ENCODE measurements at regions of chr6 and their contacts with region 1.

Region 1: DNA sequence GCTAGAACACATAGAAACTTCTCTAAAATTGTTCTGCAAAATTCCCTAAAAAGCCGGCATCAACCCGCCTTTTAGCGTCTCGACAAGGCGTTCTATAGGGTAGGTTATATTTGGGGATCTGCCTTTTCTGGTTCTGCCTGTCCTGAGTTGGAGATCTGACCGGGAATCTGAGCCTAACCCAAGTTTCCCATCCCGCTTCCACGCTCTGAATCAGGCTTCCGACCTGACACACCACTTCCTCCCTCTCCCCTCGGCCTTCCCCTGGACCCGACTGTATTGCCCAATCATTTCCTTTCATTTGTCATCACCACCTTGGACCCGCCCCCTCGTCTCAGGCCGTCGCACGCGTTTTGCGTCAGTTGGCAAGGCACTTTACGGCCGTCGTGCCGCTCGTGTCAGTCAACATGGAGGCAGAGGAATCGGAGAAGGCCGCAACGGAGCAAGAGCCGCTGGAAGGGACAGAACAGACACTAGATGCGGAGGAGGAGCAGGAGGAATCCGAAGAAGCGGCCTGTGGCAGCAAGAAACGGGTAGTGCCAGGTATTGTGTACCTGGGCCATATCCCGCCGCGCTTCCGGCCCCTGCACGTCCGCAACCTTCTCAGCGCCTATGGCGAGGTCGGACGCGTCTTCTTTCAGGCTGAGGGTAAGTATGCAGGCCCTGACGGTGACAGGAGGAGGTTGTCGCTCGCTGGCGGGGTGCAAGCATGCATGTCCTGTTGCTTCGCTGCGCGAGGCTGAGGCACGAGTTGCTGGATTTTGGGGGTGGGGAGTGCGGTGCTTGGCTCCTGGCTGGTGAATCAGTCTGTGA is at the start of gene ABT1:
- DNase-seq: peak; percentile 98
- H3K4me3 ChIP-seq: peak within 1 kb of the TSS; percentile 88 to 94
- H3K27ac ChIP-seq: peak within 1 kb of the TSS; percentile 85 to 87
- H3K4me1 ChIP-seq: peaks cover 0 to 8% of the 10 kb centered on the region in 2 donors
- H3K27me3 ChIP-seq: peaks cover 0 to 24% of the 10 kb centered on the region in 2 donors
- CTCF ChIP-seq: peak in 2 of 4 experiments; percentile 22 to 34
- POLR2A ChIP-seq: peak; percentile 50 to 84
- total RNA-seq, gene ABT1: 10.5 to 18.7 (median 16.1) TPM

Region 2: DNA sequence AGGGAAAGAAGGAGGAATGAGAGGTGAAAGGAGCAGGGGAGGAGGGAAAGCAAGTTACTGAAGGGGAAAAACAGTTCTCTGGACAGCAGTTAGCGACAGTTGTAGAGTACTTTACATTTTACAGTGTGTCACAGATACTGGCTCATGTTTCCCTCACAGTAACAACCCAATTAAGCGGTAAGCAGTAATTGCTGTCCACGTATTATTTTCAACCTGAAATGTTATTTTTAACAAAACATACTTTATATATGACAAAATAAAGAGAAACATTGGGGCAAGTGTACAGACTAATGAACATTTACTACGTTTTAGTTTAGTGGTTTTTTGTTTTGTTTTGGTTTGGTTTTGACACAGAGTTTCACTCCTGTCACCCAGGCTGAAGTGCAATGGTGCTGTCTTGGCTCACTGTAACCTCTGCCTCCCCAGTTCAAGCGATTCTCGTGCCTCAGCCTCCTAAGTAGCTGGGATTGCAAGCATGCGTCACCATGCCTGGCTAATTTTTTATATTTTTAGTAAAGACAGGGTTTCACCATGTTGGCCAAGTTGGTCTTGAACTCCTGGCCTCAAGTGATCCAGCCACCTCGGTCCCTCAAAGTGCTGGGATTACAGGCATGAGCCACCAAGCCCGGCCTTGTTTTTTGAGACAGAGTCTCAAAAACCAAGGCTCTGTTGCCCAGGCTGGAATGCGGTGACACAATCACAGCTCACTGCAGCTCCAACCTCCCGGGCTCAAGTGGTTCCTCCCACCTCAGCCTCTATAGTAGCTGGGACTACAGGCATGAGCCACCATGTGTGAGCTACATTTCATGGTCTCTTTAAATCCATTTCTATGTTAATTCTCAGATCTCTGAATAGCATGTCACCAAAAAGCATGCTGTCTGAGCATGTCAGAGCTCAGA is 254.4 kb before region 1 on chr6:
- intact Hi-C with region 1: loop called (anchors 5 kb)
- DNase-seq: no peak
- H3K4me3 ChIP-seq: no peak overlapping the region
- H3K27ac ChIP-seq: no peak overlapping the region
- H3K4me1 ChIP-seq: no peaks in the 10 kb centered on the region
- H3K27me3 ChIP-seq: no peaks in the 10 kb centered on the region
- CTCF ChIP-seq: no peak
- POLR2A ChIP-seq: no peak

Region 3: DNA sequence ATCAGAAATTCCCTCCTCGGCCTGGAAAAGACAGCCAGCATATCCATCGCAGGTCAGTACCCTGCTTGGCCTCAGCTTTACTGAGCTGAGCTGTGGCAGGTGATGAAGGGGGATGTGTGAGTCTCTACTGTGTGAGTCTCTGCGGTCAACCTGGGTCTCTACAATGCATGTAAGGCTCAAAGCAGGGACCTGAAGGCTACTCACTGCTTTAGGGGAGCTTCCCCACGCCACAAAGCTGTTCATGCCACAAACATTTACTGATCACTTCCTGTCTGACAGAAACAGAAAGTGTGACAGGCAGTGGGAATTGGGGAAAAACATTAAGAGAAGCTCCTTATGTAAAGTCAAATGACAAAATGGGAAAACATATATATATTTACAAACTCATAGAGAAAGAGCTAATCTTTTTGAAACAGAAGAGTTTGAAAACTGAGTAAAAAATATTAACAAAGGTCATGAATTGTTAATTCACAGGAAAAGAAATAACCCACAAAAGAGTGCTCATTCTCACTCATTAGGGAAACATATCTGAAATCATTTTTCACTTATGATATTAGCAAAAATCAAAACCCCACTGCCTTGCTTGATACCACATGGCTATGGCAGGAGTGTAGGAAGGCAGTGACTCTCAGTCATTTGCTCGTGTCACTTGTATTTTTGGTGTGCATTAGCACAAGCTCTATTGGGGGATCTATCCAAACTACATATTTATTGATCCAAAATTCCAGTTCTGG is 150.7 kb before region 1 on chr6:
- intact Hi-C with region 1: no loop called
- DNase-seq: no peak
- H3K4me3 ChIP-seq: no peak overlapping the region
- H3K27ac ChIP-seq: no peak overlapping the region
- H3K4me1 ChIP-seq: no peaks in the 10 kb centered on the region
- H3K27me3 ChIP-seq: no peaks in the 10 kb centered on the region
- CTCF ChIP-seq: no peak
- POLR2A ChIP-seq: no peak

Region 4: GRCh38 chr6:26629359-26629758 is 32.6 kb after region 1 on chr6:
- intact Hi-C with region 1: no loop called
- DNase-seq: no peak
- H3K4me3 ChIP-seq: no peak overlapping the region
- H3K27ac ChIP-seq: no peak overlapping the region
- H3K4me1 ChIP-seq: no peaks in the 10 kb centered on the region
- H3K27me3 ChIP-seq: no peaks in the 10 kb centered on the region
- CTCF ChIP-seq: no peak
- POLR2A ChIP-seq: no peak

Measured in uterus (tissue), 4 donors.